Transverse colon (tissue), 4 donors: ENCODE measurements at regions of chr3 and their contacts with region 1.

Region 1: GRCh38 chr3:149917124-149917667 is 53.5 kb downstream of the PFN2 start:
- DNase-seq: no peak
- H3K4me3 ChIP-seq: no peak overlapping the region
- H3K27ac ChIP-seq: no peak overlapping the region
- H3K4me1 ChIP-seq: no peaks in the 10 kb centered on the region
- H3K27me3 ChIP-seq: no peaks in the 10 kb centered on the region
- CTCF ChIP-seq: no peak
- EP300 ChIP-seq: no peak
- POLR2A ChIP-seq: no peak

Region 2: GRCh38 chr3:149898771-149899170 is 18.4 kb before region 1 on chr3:
- in situ Hi-C with region 1: no loop called
- intact Hi-C with region 1: loop called (anchors 2 kb)
- DNase-seq: no peak
- H3K4me3 ChIP-seq: no peak overlapping the region
- H3K27ac ChIP-seq: no peak overlapping the region
- H3K4me1 ChIP-seq: peaks cover 0 to 4% (median 0%) of the 10 kb centered on the region in 4 donors
- H3K27me3 ChIP-seq: no peaks in the 10 kb centered on the region
- CTCF ChIP-seq: no peak
- EP300 ChIP-seq: no peak
- POLR2A ChIP-seq: no peak

Region 3: DNA sequence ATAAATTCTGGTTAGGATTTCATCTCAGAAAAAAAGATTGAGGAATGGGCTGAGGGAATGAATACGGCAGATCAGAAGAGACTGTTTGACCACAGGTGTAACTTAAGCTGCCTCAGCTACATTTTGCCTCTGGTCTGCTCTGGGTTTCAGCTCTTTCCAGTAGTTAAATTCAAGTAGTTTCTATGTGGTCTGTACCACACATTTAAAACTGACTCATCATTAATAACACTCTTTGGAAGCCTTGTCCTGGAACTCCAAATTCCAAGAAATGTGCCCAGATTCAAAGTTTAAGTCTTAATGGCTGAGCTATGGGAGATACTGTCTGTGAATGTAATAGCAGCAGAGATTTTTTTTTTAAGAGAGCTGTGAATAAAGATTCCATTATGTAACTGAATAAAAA is 1676.7 kb after region 1 on chr3:
- in situ Hi-C with region 1: no loop called
- intact Hi-C with region 1: loop called (anchors 10 kb)
- DNase-seq: no peak
- H3K4me3 ChIP-seq: no peak overlapping the region
- H3K27ac ChIP-seq: no peak overlapping the region
- H3K4me1 ChIP-seq: no peaks in the 10 kb centered on the region
- H3K27me3 ChIP-seq: no peaks in the 10 kb centered on the region
- CTCF ChIP-seq: no peak
- EP300 ChIP-seq: no peak
- POLR2A ChIP-seq: no peak